ENCODE measurements at regions of chr5 and their contacts with region 1.

Region 1: GRCh38 chr5:131423056-131423455 is 159.2 kb downstream of the CDC42SE2 start:
- DNase-seq: no peak
- ATAC-seq: no peak
- H3K4me3 Mint-ChIP-seq: no peak overlapping the region
- H3K27ac Mint-ChIP-seq: no peak overlapping the region
- H3K4me1 Mint-ChIP-seq: peaks cover 5% of the 10 kb centered on the region
- H3K27me3 Mint-ChIP-seq: no peaks in the 10 kb centered on the region

Region 2: DNA sequence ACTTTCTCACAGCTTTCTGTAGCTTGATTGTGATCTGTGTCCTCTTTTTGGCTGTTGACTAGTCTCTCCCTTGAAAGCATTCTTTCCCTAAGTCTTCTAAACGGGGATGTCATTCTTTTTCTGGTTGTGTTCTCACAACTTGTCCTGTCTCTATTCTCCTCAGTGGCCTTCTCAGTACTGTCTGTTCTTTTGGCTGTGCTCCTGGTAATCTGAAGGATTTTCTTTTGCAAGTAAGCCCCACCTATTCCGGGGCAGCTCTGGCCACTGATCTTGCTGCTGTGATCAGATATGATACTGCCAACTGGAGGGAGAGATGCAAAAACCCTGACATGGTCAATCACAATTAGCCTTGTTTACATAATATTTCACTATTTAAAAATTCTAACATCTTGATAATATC is 13.0 kb after region 1 on chr5:
- CTCF ChIA-PET with region 1: interaction called, 13 read pairs
- POLR2A ChIA-PET with region 1: no interaction called
- DNase-seq: no peak
- ATAC-seq: no peak
- H3K4me3 Mint-ChIP-seq: no peak overlapping the region
- H3K27ac Mint-ChIP-seq: peak overlapping the region; percentile 7
- H3K4me1 Mint-ChIP-seq: no peaks in the 10 kb centered on the region
- H3K27me3 Mint-ChIP-seq: no peaks in the 10 kb centered on the region

Measured in activated CD8-positive, alpha-beta T cell treated with anti-CD3 and anti-CD28 coated beads, Interleukin-2, amount 10 ng/mL, durations not matched to agents 7 days and 5 days (primary cell).